Endothelial cell of umbilical vein (primary cell): ENCODE measurements at regions of chr5 and their contacts with region 1.

Region 1: GRCh38 chr5:32076699-32077695 is 97.1 kb downstream of the GOLPH3 start:
- DNase-seq: peak; percentile 74
- H3K4me3 ChIP-seq: no peak overlapping the region
- H3K27ac ChIP-seq: no peak overlapping the region
- H3K4me1 ChIP-seq: no peaks in the 10 kb centered on the region
- H3K27me3 ChIP-seq: no peaks in the 10 kb centered on the region
- CTCF ChIP-seq: peak; percentile 49 to 61
- POLR2A ChIP-seq: no peak

Region 2: GRCh38 chr5:31809050-31809870 is 267.7 kb before region 1 on chr5:
- CTCF ChIA-PET with region 1: interaction called, 19 read pairs
- POLR2A ChIA-PET with region 1: no interaction called
- dilution Hi-C with region 1: no loop called
- intact Hi-C with region 1: no loop called
- DNase-seq: peak; percentile 48
- H3K4me3 ChIP-seq: no peak overlapping the region
- H3K27ac ChIP-seq: no peak overlapping the region
- H3K4me1 ChIP-seq: no peaks in the 10 kb centered on the region
- H3K27me3 ChIP-seq: no peaks in the 10 kb centered on the region
- CTCF ChIP-seq: peak; percentile 43 to 64
- POLR2A ChIP-seq: no peak

Region 3: DNA sequence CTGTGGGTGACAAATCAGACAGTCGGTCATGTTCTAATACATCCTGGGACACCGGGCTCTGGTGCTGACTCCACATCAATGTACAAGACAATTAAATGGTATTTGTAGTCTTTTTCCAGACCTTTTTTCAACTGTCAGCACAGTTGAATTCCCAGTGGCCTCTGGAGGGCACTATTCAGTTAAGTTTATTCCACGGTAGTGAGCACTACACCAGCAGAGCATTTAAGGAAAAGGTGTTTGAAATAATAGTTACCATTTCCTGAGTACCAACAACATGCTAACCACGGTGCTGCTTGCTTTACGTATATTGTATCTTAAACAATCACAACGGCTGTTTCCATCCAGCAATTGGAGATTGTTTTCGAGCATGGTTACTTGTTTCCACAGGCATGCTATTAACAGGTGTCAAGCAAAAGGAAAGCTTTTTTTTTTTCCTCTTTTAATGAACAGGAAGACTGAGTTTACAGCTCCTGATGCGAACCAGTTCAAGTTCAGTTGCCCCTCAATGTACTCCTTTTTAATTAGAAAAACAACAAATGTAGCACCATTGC is 251.4 kb before region 1 on chr5:
- CTCF ChIA-PET with region 1: interaction called, 189 read pairs
- POLR2A ChIA-PET with region 1: no interaction called
- dilution Hi-C with region 1: no loop called
- intact Hi-C with region 1: loop called (anchors 1 kb)
- DNase-seq: peak; percentile 72
- H3K4me3 ChIP-seq: no peak overlapping the region
- H3K27ac ChIP-seq: no peak overlapping the region
- H3K4me1 ChIP-seq: no peaks in the 10 kb centered on the region
- H3K27me3 ChIP-seq: no peaks in the 10 kb centered on the region
- CTCF ChIP-seq: peak; percentile 58 to 64
- POLR2A ChIP-seq: no peak

Region 4: GRCh38 chr5:31934156-31934555 is 142.8 kb before region 1 on chr5:
- CTCF ChIA-PET with region 1: interaction called, 17 read pairs
- POLR2A ChIA-PET with region 1: no interaction called
- dilution Hi-C with region 1: no loop called
- intact Hi-C with region 1: loop called (anchors 1 kb)
- DNase-seq: no peak
- H3K4me3 ChIP-seq: no peak overlapping the region
- H3K27ac ChIP-seq: no peak overlapping the region
- H3K4me1 ChIP-seq: peaks cover 2% of the 10 kb centered on the region
- H3K27me3 ChIP-seq: no peaks in the 10 kb centered on the region
- CTCF ChIP-seq: no peak
- POLR2A ChIP-seq: no peak

Region 5: GRCh38 chr5:32057162-32058096 is 19.6 kb before region 1 on chr5:
- CTCF ChIA-PET with region 1: interaction called, 18 read pairs
- POLR2A ChIA-PET with region 1: no interaction called
- dilution Hi-C with region 1: no loop called
- intact Hi-C with region 1: no loop called
- DNase-seq: no peak
- H3K4me3 ChIP-seq: no peak overlapping the region
- H3K27ac ChIP-seq: no peak overlapping the region
- H3K4me1 ChIP-seq: no peaks in the 10 kb centered on the region
- H3K27me3 ChIP-seq: no peaks in the 10 kb centered on the region
- CTCF ChIP-seq: peak in 1 of 2 donors; percentile 7
- POLR2A ChIP-seq: no peak